PC-3 (cell line): ENCODE measurements at regions of chr2 and their contacts with region 1.

Region 1: DNA sequence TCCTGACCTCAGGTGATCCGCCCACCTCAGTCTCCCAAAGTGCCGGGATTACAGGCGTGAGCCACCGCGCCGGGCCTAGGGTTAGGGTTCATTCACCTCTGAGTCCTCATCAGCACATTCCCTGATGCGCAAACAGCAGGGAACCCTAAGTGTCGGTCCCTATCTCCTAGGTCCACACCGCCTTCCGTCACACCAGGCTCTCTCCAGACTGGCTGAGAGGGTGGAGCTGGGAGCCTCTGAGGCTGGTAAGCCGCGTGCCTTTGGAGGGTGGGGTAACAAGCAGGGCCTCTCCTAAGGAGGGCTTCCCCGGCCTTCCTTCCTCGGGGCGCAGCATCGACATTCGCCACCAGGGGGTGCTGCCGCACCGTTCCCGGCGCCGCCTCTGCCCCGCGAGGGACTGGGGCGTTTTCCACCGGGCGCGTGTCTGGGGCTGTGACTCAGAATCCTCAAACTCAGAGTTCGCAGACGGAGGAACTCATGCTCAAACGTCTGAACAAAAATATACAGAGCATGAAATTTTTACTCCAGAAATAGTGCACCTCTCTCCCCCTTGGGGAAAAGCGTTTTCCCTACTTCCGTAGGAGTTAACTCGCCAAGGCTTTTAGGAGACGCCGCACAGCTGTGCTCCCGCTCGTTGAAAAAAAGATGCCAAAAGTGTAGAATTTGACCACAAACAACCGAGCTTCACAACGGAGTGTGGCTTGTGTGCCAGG is 63.9 kb upstream of the ASAP2 start:
- DNase-seq: peak; percentile 94
- ATAC-seq: peak; percentile 86
- H3K4me3 ChIP-seq: peak overlapping the region; percentile 54
- H3K27ac ChIP-seq: peak overlapping the region; percentile 67
- H3K4me1 ChIP-seq: peaks cover 28% of the 10 kb centered on the region
- H3K27me3 ChIP-seq: no peaks in the 10 kb centered on the region
- CTCF ChIP-seq: peak; percentile 98

Region 2: GRCh38 chr2:9003616-9004337 is 138.9 kb before region 1 on chr2 and contains the start of gene MBOAT2:
- CTCF ChIA-PET with region 1: interaction called, 3 read pairs
- POLR2A ChIA-PET with region 1: no interaction called
- intact Hi-C with region 1: loop called (anchors 1 kb)
- DNase-seq: peak; percentile 86
- ATAC-seq: peak; percentile 63
- H3K4me3 ChIP-seq: peak within 1 kb of the TSS; percentile 91
- H3K27ac ChIP-seq: peak within 1 kb of the TSS; percentile 87
- H3K4me1 ChIP-seq: peaks cover 40% of the 10 kb centered on the region
- H3K27me3 ChIP-seq: no peaks in the 10 kb centered on the region
- CTCF ChIP-seq: no peak
- total RNA-seq, gene MBOAT2: 26.8 and 30.7 TPM in 2 replicates

Region 3: DNA sequence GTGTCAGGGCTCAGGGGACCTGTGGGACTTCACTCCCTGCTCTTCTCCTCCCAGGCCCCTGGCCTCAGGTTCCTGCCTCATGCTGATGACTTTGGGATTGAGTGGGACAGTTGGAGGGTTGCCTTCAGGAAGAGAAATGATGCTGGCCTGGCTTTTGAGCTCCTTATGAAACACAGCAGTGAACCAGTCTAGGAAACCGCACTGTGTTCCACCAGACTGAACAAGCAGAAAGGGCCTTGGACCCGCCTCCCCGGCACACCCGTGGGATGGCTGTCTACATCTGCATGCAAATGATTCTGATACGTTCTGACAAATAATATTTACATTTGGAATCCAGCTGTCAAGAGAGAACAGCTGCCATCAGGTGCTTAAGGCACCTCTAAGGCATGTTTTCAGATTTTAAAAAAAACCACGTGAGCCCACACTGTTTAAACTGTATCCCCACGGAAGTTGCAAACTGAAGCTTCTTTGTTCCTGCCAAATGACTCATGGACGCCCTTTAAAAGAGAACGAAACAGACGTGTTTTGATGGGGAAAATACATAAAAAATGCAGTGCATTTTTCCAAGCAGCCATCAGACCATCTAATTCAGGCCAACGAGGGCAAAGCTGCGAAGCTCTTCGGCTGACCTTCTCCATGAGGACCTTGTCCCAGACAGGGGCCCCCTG is 36.3 kb after region 1 on chr2:
- CTCF ChIA-PET with region 1: interaction called, 4 read pairs
- POLR2A ChIA-PET with region 1: no interaction called
- intact Hi-C with region 1: loop called (anchors 1 kb)
- DNase-seq: peak; percentile 92
- ATAC-seq: peak; percentile 64
- H3K4me3 ChIP-seq: peak overlapping the region; percentile 55
- H3K27ac ChIP-seq: peak overlapping the region; percentile 97
- H3K4me1 ChIP-seq: peaks cover 52% of the 10 kb centered on the region
- H3K27me3 ChIP-seq: no peaks in the 10 kb centered on the region
- CTCF ChIP-seq: no peak

Region 4: DNA sequence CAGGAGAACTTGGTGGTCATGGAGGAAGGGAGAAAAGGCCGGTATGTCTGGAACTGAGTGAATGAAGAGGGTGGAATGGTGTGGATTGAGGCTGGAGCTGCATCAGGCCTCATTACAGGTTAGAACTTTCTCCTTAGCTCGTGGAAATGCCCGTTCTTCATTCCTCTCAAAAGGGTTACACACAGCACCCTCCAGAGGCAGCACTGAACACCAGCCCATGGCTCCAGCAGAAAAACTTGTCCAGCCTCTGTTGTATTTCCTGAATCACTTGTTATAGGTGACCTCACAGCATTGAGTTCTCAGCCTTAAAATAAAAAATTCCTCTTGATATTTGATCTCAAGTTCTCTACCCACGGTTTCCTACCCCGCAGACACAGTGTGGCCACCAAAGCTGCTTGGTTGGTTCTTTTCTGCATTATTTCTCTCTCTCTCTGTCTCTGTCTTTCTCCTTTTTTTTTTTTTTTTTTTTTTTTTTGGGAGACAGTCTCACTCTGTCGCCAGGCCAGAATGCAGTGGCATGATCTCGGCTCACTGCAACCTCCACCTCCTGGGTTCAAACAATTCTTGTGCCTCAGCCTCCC is 191.0 kb after region 1 on chr2:
- CTCF ChIA-PET with region 1: interaction called, 4 read pairs
- POLR2A ChIA-PET with region 1: no interaction called
- intact Hi-C with region 1: loop called (anchors 2 kb)
- DNase-seq: peak; percentile 90
- ATAC-seq: peak; percentile 84
- H3K4me3 ChIP-seq: no peak overlapping the region
- H3K27ac ChIP-seq: peak overlapping the region; percentile 12; the same call in 1 of the 2 replicates
- H3K4me1 ChIP-seq: peaks cover 38% of the 10 kb centered on the region
- H3K27me3 ChIP-seq: no peaks in the 10 kb centered on the region
- CTCF ChIP-seq: peak; percentile 87

Region 5: DNA sequence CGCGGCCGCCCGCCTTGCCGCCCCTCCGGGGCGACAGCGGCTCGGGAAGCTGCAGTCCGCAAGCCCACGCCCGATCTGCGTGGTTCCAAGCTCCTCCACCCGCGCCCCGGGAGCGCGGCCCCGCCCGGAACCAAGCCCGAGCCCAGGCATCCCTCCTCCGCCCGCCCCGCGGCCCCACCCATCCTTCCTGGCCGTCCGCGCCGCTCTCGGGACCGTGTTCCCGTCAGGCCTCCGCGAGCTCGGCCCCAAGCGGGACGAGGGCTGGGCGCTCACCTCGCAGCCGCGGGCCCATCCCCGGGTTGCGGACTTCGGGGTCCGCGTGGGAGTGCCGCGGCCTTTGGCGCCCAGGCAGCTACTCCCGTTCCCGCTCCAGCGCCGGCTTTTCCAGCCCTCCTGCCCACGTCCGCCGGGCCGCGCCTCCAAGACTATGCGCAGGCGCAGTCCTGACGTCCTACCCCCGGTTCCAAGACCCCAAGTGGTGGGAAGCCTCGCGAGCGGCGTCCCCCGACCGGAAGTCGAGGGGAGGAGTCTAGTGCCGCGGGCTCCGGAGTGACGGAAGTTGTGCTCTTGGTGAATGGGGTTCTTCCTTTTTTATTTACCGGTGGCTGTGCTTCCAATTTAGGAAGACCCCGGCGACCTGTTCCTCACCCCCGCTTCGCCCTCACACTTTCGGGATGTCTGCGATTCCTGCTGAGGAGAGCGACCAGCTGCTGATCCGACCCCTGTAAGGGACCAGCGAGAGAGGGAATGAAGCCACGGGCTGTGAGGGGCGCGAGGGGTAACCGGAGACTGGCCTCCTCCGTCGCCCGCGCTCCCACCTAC is 280.6 kb after region 1 on chr2 and contains the starts of genes CPSF3 and ITGB1BP1:
- CTCF ChIA-PET with region 1: no interaction called
- POLR2A ChIA-PET with region 1: no interaction called
- intact Hi-C with region 1: loop called (anchors 2 kb)
- DNase-seq: peak; percentile 98
- ATAC-seq: peak; percentile 86
- H3K4me3 ChIP-seq: peak within 1 kb of the TSS; percentile 96
- H3K27ac ChIP-seq: peak within 1 kb of the TSS; percentile 61
- H3K4me1 ChIP-seq: peaks cover 18% of the 10 kb centered on the region
- H3K27me3 ChIP-seq: no peaks in the 10 kb centered on the region
- CTCF ChIP-seq: no peak
- total RNA-seq, gene CPSF3: 42.6 and 60.1 TPM in 2 replicates
- total RNA-seq, gene ITGB1BP1: 77.6 and 78.5 TPM in 2 replicates